CD8-positive, alpha-beta T cell (primary cell): ENCODE measurements at regions of chr7 and their contacts with region 1.

Region 1: GRCh38 chr7:149005241-149006050 is 22.9 kb downstream of the PDIA4 start:
- DNase-seq: peak; percentile 61 to 91 (median 87)
- ATAC-seq: peak; percentile 92
- H3K4me3 ChIP-seq: no peak overlapping the region
- H3K4me3 Mint-ChIP-seq: no peak overlapping the region
- H3K27ac ChIP-seq: no peak overlapping the region
- H3K27ac Mint-ChIP-seq: no peak overlapping the region
- H3K4me1 ChIP-seq: peaks cover 4% of the 10 kb centered on the region
- H3K4me1 Mint-ChIP-seq: peaks cover 4% of the 10 kb centered on the region
- H3K27me3 ChIP-seq: no peaks in the 10 kb centered on the region
- H3K27me3 Mint-ChIP-seq: no peaks in the 10 kb centered on the region
- CTCF ChIP-seq: peak; percentile 75

Region 2: DNA sequence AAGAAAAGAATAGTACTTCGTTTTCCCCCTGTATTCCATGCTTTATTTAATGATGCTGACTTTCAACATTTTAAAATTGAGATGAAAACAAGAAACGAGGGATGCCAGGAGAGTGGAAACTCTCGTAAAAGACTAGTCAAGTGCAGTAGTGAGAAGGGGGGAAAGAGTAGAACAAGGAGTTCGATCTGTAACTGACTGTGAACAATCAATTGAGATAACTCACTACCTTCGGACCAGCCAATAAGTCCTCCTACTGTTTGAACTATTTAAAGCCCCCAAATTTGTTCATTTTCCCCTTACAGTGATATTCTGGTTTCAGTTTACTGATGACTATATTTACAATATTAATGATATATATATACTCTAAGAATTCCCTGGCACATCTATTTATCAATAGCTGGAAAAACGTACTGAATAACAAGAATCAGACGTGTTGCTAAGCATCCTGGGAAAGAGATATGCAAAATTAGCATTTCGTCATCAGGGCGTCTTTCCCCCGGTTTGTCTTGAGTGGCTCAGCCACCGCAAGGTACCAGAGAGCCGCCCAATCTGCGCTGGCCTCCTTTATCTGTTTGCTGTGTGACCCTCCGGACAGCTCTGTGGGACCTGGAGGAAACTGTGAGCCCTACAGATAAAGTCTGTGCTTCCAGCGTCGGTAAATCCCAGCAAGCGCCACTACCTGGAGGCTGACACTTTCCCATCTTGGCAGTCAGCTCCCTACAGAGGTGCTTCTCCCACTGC is 18.3 kb before region 1 on chr7:
- CTCF ChIA-PET with region 1: interaction called, 10 read pairs
- POLR2A ChIA-PET with region 1: interaction called, 4 read pairs
- intact Hi-C with region 1: no loop called
- DNase-seq: peak; percentile 43 to 93 (median 80)
- ATAC-seq: peak; percentile 76
- H3K4me3 ChIP-seq: peak overlapping the region; percentile 82 to 97
- H3K4me3 Mint-ChIP-seq: peak overlapping the region; percentile 96
- H3K27ac ChIP-seq: peak overlapping the region; percentile 74 to 93
- H3K27ac Mint-ChIP-seq: peak overlapping the region; percentile 96
- H3K4me1 ChIP-seq: peaks cover 41% of the 10 kb centered on the region
- H3K4me1 Mint-ChIP-seq: peaks cover 52% of the 10 kb centered on the region
- H3K27me3 ChIP-seq: no peaks in the 10 kb centered on the region
- H3K27me3 Mint-ChIP-seq: no peaks in the 10 kb centered on the region
- CTCF ChIP-seq: no peak

Region 3: DNA sequence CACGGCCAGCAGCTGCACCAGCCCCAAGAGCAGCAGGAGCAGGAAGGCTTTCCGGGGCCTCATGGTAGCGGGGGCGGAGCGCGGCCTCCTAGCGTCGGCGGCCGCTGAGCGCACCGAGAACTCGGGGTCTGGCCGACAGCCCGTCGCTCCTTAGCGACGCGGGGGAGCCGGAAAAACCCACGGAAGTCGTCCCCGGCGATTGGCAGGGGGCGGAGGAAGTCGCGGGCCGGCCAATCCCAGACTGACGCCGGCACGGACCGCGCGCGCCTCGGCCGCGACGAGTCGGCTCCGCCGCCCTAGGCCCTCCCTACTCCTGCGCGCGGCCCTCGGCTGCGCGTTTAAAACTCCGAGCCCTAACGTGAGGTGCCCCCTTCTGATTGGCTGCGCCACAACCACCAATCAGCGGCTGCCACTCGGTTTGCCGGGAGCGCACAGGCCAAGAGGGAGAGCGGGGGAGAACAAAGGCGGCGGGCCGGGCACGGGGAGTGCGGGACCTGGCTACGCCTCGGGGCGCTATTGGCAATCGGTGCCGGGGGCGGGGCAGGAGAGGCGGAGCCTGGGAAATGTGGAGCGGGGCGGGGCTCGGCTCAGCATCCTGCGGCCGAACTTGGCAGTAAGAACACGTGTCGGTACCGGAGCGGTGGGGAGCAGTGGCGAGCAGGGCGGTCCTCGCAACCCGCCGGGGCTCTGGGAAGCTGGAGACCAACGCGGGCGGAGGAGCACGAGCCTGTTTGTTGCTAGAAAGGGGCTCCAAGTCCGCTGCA is 23.1 kb after region 1 on chr7 and contains the start of gene PDIA4:
- CTCF ChIA-PET with region 1: interaction called, 52 read pairs
- POLR2A ChIA-PET with region 1: interaction called, 3 read pairs
- intact Hi-C with region 1: loop called (anchors 1 kb)
- DNase-seq: peak; percentile 98 to 100 (median 99)
- ATAC-seq: peak; percentile 88
- H3K4me3 ChIP-seq: peak within 1 kb of the TSS; percentile 58 to 78
- H3K4me3 Mint-ChIP-seq: peak within 1 kb of the TSS; percentile 87
- H3K27ac ChIP-seq: peak within 1 kb of the TSS; percentile 62 to 78
- H3K27ac Mint-ChIP-seq: peak within 1 kb of the TSS; percentile 94
- H3K4me1 ChIP-seq: peaks cover 27% of the 10 kb centered on the region
- H3K4me1 Mint-ChIP-seq: peaks cover 49% of the 10 kb centered on the region
- H3K27me3 ChIP-seq: no peaks in the 10 kb centered on the region
- H3K27me3 Mint-ChIP-seq: no peaks in the 10 kb centered on the region
- CTCF ChIP-seq: no peak
- total RNA-seq, gene PDIA4: 12.0 to 14.5 TPM

Region 4: GRCh38 chr7:149060156-149060555 is 54.7 kb after region 1 on chr7:
- CTCF ChIA-PET with region 1: interaction called, 155 read pairs
- POLR2A ChIA-PET with region 1: interaction called, 7 read pairs
- intact Hi-C with region 1: loop called (anchors 1 kb)
- DNase-seq: no peak
- ATAC-seq: no peak
- H3K4me3 ChIP-seq: no peak overlapping the region
- H3K4me3 Mint-ChIP-seq: no peak overlapping the region
- H3K27ac ChIP-seq: no peak overlapping the region
- H3K27ac Mint-ChIP-seq: no peak overlapping the region
- H3K4me1 ChIP-seq: no peaks in the 10 kb centered on the region
- H3K4me1 Mint-ChIP-seq: peaks cover 1% of the 10 kb centered on the region
- H3K27me3 ChIP-seq: no peaks in the 10 kb centered on the region
- H3K27me3 Mint-ChIP-seq: no peaks in the 10 kb centered on the region
- CTCF ChIP-seq: no peak

Region 5: GRCh38 chr7:149071641-149072437 is 66.4 kb after region 1 on chr7:
- CTCF ChIA-PET with region 1: interaction called, 155 read pairs
- POLR2A ChIA-PET with region 1: no interaction called
- intact Hi-C with region 1: no loop called
- DNase-seq: peak; percentile 19 to 74 (median 49)
- ATAC-seq: peak; percentile 73
- H3K4me3 ChIP-seq: no peak overlapping the region
- H3K4me3 Mint-ChIP-seq: no peak overlapping the region
- H3K27ac ChIP-seq: peak overlapping the region; percentile 42 to 63
- H3K27ac Mint-ChIP-seq: peak overlapping the region; percentile 77
- H3K4me1 ChIP-seq: no peaks in the 10 kb centered on the region
- H3K4me1 Mint-ChIP-seq: peaks cover 3% of the 10 kb centered on the region
- H3K27me3 ChIP-seq: no peaks in the 10 kb centered on the region
- H3K27me3 Mint-ChIP-seq: no peaks in the 10 kb centered on the region
- CTCF ChIP-seq: no peak